CD4-positive, alpha-beta T cell (primary cell): ENCODE measurements at regions of chr5 and their contacts with region 1.

Region 1: DNA sequence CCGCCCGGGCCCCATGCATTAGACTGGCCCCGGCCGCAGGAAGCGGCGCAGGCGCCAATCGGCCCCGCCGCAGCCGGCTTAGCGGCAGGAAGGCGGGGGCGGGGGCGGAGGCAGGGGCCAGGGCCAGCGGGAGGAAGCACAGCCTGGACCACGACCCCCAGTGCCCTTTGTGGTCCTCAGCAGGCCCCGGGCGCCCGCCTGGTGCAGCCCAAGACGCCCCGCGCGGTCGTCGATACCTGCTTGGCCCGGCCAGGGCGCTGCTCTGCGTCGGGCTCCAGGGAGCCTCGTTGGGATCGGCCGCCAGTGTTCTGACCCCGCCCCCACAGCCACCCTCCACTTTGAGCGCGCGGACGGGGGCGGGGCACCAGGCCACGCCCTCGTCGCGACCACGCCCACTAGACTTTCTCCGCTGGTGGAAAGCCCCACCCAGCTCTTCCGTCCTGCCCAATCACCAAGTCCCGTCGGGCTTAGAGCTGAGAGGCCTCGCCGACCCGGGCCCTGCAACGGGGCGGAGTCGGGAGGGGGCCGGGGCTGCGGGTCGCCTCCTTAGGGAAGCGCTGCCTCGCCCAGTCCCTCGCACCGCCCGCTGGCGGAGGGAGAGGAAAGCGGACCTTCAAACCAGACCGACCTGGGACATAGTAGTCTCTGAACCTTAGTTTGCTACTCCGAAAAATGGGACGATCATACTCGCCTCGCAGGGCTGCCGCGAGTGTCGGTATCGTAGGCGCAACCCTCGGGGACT is at the start of gene PDLIM7:
- DNase-seq: peak; percentile 87 to 98 (median 94)
- ATAC-seq: peak; percentile 89
- H3K4me3 ChIP-seq: peak within 1 kb of the TSS; percentile 70
- H3K4me3 Mint-ChIP-seq: peak within 1 kb of the TSS; percentile 74
- H3K27ac ChIP-seq: no peak within 1 kb of the TSS
- H3K27ac Mint-ChIP-seq: no peak within 1 kb of the TSS
- H3K4me1 ChIP-seq: peaks cover 50% of the 10 kb centered on the region
- H3K4me1 Mint-ChIP-seq: peaks cover 31% of the 10 kb centered on the region
- H3K27me3 ChIP-seq: no peaks in the 10 kb centered on the region
- H3K27me3 Mint-ChIP-seq: no peaks in the 10 kb centered on the region
- CTCF ChIP-seq: no peak
- total RNA-seq, gene PDLIM7: 5.2 to 6.0 TPM

Region 2: GRCh38 chr5:177311723-177312648 is 185.5 kb before region 1 on chr5 and contains the start of gene MXD3:
- CTCF ChIA-PET with region 1: interaction called, 5 read pairs
- POLR2A ChIA-PET with region 1: interaction called, 4 read pairs
- intact Hi-C with region 1: loop called in 1 of 2 experiments (anchors 1 kb)
- DNase-seq: peak; percentile 87 to 96 (median 94)
- ATAC-seq: peak; percentile 93
- H3K4me3 ChIP-seq: peak within 1 kb of the TSS; percentile 69
- H3K4me3 Mint-ChIP-seq: peak within 1 kb of the TSS; percentile 83
- H3K27ac ChIP-seq: peak within 1 kb of the TSS in 1 of 2 donors; percentile 3
- H3K27ac Mint-ChIP-seq: no peak within 1 kb of the TSS
- H3K4me1 ChIP-seq: peaks cover 59% of the 10 kb centered on the region
- H3K4me1 Mint-ChIP-seq: peaks cover 40% of the 10 kb centered on the region
- H3K27me3 ChIP-seq: peaks cover 0 to 3% of the 10 kb centered on the region in 2 experiments
- H3K27me3 Mint-ChIP-seq: peaks cover 6% of the 10 kb centered on the region
- CTCF ChIP-seq: no peak
- total RNA-seq, gene MXD3: 5.8 to 7.5 TPM

Region 3: DNA sequence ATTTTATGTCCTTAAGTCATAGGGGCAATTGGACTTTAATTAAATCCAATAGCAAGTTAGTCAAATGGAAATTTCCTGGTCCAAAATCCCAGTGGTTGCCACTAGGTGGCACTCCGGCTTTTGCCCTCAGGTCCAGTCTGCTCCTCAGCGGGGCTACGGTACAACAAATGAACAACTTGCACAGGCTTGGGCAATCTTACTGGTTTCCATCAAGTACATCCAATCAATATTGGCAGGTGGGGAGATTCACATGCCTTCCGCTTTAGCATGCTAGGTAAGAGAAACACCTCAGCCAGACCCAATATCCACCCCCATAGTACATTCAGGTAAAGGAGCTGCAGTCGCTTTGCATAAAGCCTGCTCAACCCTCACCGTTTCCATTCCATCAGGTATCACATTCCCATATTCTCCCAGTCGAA is 179.5 kb before region 1 on chr5:
- CTCF ChIA-PET with region 1: interaction called, 3 read pairs
- POLR2A ChIA-PET with region 1: no interaction called
- intact Hi-C with region 1: loop called (anchors 1 kb)
- DNase-seq: peak; percentile 58 to 87 (median 70)
- ATAC-seq: peak; percentile 86
- H3K4me3 ChIP-seq: no peak overlapping the region
- H3K4me3 Mint-ChIP-seq: no peak overlapping the region
- H3K27ac ChIP-seq: no peak overlapping the region
- H3K27ac Mint-ChIP-seq: no peak overlapping the region
- H3K4me1 ChIP-seq: peaks cover 16% of the 10 kb centered on the region
- H3K4me1 Mint-ChIP-seq: peaks cover 22% of the 10 kb centered on the region
- H3K27me3 ChIP-seq: no peaks in the 10 kb centered on the region
- H3K27me3 Mint-ChIP-seq: no peaks in the 10 kb centered on the region
- CTCF ChIP-seq: peak; percentile 92

Region 4: GRCh38 chr5:177425801-177426565 is 71.5 kb before region 1 on chr5:
- CTCF ChIA-PET with region 1: interaction called, 3 read pairs
- POLR2A ChIA-PET with region 1: interaction called, 12 read pairs
- intact Hi-C with region 1: no loop called
- DNase-seq: peak; percentile 98 to 100 (median 100)
- ATAC-seq: peak; percentile 79
- H3K4me3 ChIP-seq: peak overlapping the region; percentile 52
- H3K4me3 Mint-ChIP-seq: peak overlapping the region; percentile 97
- H3K27ac ChIP-seq: peak overlapping the region; percentile 77 to 83
- H3K27ac Mint-ChIP-seq: peak overlapping the region; percentile 96
- H3K4me1 ChIP-seq: peaks cover 63% of the 10 kb centered on the region
- H3K4me1 Mint-ChIP-seq: peaks cover 42% of the 10 kb centered on the region
- H3K27me3 ChIP-seq: no peaks in the 10 kb centered on the region
- H3K27me3 Mint-ChIP-seq: no peaks in the 10 kb centered on the region
- CTCF ChIP-seq: no peak

Region 5: DNA sequence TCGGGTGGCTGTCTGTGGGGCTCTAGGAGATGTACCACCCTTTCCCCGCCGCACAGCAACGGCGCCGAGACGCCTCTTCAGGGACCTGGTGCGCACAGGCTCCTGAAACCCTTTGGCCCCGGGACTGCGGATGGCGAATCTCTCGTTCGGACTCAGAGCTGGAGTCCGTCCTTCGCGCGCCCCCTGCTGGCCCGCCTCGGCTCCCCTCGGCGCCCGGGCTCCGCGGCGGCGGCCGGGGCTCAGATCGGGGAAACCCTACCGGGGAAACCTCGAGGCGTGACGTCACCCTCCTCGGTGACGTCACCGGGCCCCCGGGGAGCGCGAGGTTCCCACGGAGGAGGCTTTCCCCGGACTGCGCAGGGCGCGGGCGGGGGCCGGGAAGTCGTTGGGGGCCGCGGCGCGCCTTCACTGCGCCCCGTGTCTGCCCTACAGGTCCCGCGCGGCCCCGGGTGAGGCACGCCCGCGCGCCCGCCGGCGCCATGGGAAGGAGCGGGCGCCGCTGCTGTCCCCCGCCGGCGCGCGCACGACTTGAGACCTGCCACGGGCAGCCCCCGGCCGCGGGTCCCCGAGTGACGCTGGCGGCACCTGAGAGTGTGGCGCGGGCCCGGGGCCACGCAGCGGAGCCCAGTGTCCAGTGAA is 42.9 kb before region 1 on chr5:
- CTCF ChIA-PET with region 1: interaction called, 7 read pairs
- POLR2A ChIA-PET with region 1: interaction called, 12 read pairs
- intact Hi-C with region 1: loop called (anchors 1 to 2 kb)
- DNase-seq: peak; percentile 87 to 97 (median 94)
- ATAC-seq: peak; percentile 45
- H3K4me3 ChIP-seq: peak overlapping the region; percentile 71
- H3K4me3 Mint-ChIP-seq: peak overlapping the region; percentile 89
- H3K27ac ChIP-seq: peak overlapping the region; percentile 90 to 95
- H3K27ac Mint-ChIP-seq: peak overlapping the region; percentile 93
- H3K4me1 ChIP-seq: peaks cover 52% of the 10 kb centered on the region
- H3K4me1 Mint-ChIP-seq: peaks cover 43% of the 10 kb centered on the region
- H3K27me3 ChIP-seq: no peaks in the 10 kb centered on the region
- H3K27me3 Mint-ChIP-seq: no peaks in the 10 kb centered on the region
- CTCF ChIP-seq: peak; percentile 79

Region 6: GRCh38 chr5:177473461-177474001 is 23.9 kb before region 1 on chr5 and contains the start of gene DBN1:
- CTCF ChIA-PET with region 1: interaction called, 4 read pairs
- POLR2A ChIA-PET with region 1: interaction called, 4 read pairs
- intact Hi-C with region 1: loop called in 1 of 2 experiments (anchors 2 kb)
- DNase-seq: peak in 3 of 14 experiments; percentile 33 to 41 (median 40)
- ATAC-seq: peak; percentile 61
- H3K4me3 ChIP-seq: peak within 1 kb of the TSS; percentile 45
- H3K4me3 Mint-ChIP-seq: peak within 1 kb of the TSS; percentile 90
- H3K27ac ChIP-seq: no peak within 1 kb of the TSS
- H3K27ac Mint-ChIP-seq: peak within 1 kb of the TSS; percentile 64
- H3K4me1 ChIP-seq: peaks cover 36% of the 10 kb centered on the region
- H3K4me1 Mint-ChIP-seq: peaks cover 22% of the 10 kb centered on the region
- H3K27me3 ChIP-seq: peaks cover 0 to 5% of the 10 kb centered on the region in 2 experiments
- H3K27me3 Mint-ChIP-seq: peaks cover 6% of the 10 kb centered on the region
- CTCF ChIP-seq: no peak
- total RNA-seq, gene DBN1: 1.8 to 2.5 TPM

Region 7: DNA sequence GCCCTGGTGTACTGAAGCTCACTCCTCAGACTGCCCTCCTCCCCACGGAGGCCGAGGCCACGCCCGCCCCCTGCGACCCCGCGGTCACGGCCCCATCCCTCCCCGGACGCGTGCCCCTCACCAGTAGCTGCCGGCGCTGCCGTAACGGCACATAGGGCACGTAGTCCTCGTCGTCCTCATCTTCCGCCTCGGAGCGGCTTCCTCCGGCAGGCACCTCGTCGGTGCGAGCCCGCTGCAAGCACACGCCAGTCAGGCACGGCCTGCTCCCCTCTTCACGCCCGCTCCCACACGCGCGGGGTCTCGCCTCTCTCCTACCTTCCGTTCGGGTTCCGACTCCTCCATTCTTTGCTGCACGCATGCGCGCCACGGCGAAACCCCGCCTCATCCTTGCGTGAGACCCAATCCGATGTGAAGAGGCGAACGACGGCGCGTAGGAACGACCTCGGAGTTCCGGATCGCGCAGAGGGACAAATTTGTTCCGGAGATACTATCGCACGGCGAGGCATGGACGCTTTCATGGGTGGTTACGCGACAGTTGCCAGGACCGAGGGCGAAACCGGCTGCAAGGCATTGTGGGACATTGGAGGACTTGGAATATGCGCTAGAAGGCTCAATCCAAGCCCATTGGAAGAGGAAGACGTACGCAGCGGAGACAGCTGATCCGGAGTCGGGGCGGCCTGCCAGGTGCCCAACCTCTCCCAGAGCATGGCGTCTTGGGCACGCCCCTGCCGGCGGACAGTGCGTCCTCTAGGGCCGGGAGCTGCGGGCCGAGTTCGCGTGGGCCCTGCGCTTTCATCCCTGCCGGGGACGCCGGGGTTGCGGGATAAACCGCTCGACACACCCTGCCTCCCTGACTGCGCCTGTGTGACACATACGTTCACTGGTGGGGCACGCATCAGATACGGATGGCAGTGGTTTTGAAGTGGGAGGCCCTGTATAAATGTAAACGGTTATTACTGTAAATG is 19.4 kb after region 1 on chr5 and contains the start of gene DDX41:
- CTCF ChIA-PET with region 1: interaction called, 3 read pairs
- POLR2A ChIA-PET with region 1: interaction called, 5 read pairs
- intact Hi-C with region 1: loop called in 1 of 2 experiments (anchors 1 kb)
- DNase-seq: peak; percentile 88 to 98 (median 94)
- ATAC-seq: peak; percentile 90
- H3K4me3 ChIP-seq: peak within 1 kb of the TSS; percentile 72
- H3K4me3 Mint-ChIP-seq: peak within 1 kb of the TSS; percentile 93
- H3K27ac ChIP-seq: peak within 1 kb of the TSS; percentile 36 to 54
- H3K27ac Mint-ChIP-seq: peak within 1 kb of the TSS; percentile 84
- H3K4me1 ChIP-seq: peaks cover 51% of the 10 kb centered on the region
- H3K4me1 Mint-ChIP-seq: peaks cover 43% of the 10 kb centered on the region
- H3K27me3 ChIP-seq: no peaks in the 10 kb centered on the region
- H3K27me3 Mint-ChIP-seq: no peaks in the 10 kb centered on the region
- CTCF ChIP-seq: no peak
- total RNA-seq, gene DDX41: 49.6 to 49.7 TPM

Region 8: GRCh38 chr5:177529247-177530203 is 32.1 kb after region 1 on chr5:
- CTCF ChIA-PET with region 1: no interaction called
- POLR2A ChIA-PET with region 1: no interaction called
- intact Hi-C with region 1: no loop called
- DNase-seq: no peak
- ATAC-seq: no peak
- H3K4me3 ChIP-seq: no peak overlapping the region
- H3K4me3 Mint-ChIP-seq: no peak overlapping the region
- H3K27ac ChIP-seq: no peak overlapping the region
- H3K27ac Mint-ChIP-seq: no peak overlapping the region
- H3K4me1 ChIP-seq: no peaks in the 10 kb centered on the region
- H3K4me1 Mint-ChIP-seq: no peaks in the 10 kb centered on the region
- H3K27me3 ChIP-seq: no peaks in the 10 kb centered on the region
- H3K27me3 Mint-ChIP-seq: no peaks in the 10 kb centered on the region
- CTCF ChIP-seq: no peak